Naive thymus-derived CD4-positive, alpha-beta T cell (primary cell): ENCODE measurements at regions of chr17 and their contacts with region 1.

Region 1: DNA sequence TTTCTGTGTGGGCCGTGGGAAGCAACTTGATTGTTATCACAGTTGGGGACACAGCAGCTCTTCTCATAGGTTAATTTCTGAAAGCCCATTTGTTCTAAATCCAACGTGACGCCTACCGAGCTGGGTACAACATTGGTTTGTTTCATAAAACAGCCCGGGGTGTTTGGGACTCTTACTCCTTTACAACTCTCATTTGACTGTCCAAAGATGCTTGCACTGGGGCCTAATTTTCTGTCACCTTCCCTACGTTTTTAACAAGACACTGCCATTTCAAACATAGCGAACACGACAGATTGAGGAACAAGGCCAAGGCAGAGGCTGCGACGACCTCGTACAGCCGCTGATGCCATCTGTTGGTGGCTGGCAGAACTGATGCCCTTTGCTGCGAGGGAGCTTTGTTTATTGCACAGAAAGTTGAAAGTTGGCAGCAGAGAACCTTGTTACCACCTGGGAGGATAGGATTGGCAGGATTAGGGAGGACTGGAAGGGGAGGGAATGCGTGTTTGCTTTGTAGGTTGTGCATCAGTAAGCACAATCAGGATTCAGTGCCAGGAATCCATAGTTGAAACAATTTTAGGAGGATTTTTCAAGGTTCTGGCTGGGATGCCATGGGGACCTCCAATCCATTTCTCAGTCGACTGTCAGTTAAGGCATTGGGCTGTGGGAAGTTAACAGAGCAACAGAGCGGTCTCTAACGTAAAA is 98.3 kb downstream of the PITPNC1 start:
- DNase-seq: peak; percentile 66 to 89 (median 86)
- ATAC-seq: peak; percentile 93
- H3K4me3 ChIP-seq: peak overlapping the region; percentile 22
- H3K4me3 Mint-ChIP-seq: peak overlapping the region; percentile 60 to 88 (median 84)
- H3K27ac ChIP-seq: peak overlapping the region; percentile 77
- H3K27ac Mint-ChIP-seq: peak overlapping the region; percentile 90 to 99 (median 98)
- H3K4me1 ChIP-seq: peaks cover 44 to 53% of the 10 kb centered on the region in 2 donors
- H3K4me1 Mint-ChIP-seq: peaks cover 37 to 85% (median 65%) of the 10 kb centered on the region in 7 donors
- H3K27me3 ChIP-seq: no peaks in the 10 kb centered on the region
- H3K27me3 Mint-ChIP-seq: no peaks in the 10 kb centered on the region

Region 2: GRCh38 chr17:67400193-67400592 is 75.2 kb before region 1 on chr17:
- CTCF ChIA-PET with region 1: interaction called, 17 read pairs
- POLR2A ChIA-PET with region 1: interaction called, 18 read pairs
- intact Hi-C with region 1: loop called in 1 of 2 experiments (anchors 1 kb)
- DNase-seq: peak in 6 of 9 donors; percentile 64 to 80 (median 76)
- ATAC-seq: peak; percentile 62
- H3K4me3 ChIP-seq: peak overlapping the region; percentile 32
- H3K4me3 Mint-ChIP-seq: peak overlapping the region; percentile 66 to 93 (median 83)
- H3K27ac ChIP-seq: peak overlapping the region; percentile 83
- H3K27ac Mint-ChIP-seq: peak overlapping the region; percentile 82 to 100 (median 99)
- H3K4me1 ChIP-seq: peaks cover 9 to 77% of the 10 kb centered on the region in 2 donors
- H3K4me1 Mint-ChIP-seq: peaks cover 32 to 88% (median 77%) of the 10 kb centered on the region in 7 donors
- H3K27me3 ChIP-seq: no peaks in the 10 kb centered on the region
- H3K27me3 Mint-ChIP-seq: no peaks in the 10 kb centered on the region

Region 3: GRCh38 chr17:67431249-67432048 is 43.9 kb before region 1 on chr17:
- CTCF ChIA-PET with region 1: interaction called, 19 read pairs
- POLR2A ChIA-PET with region 1: interaction called, 176 read pairs
- intact Hi-C with region 1: loop called (anchors 1 kb)
- DNase-seq: no peak
- ATAC-seq: peak; percentile 18
- H3K4me3 ChIP-seq: no peak overlapping the region
- H3K4me3 Mint-ChIP-seq: peak overlapping the region in 9 of 10 donors; percentile 8 to 80 (median 26)
- H3K27ac ChIP-seq: peak overlapping the region; percentile 43
- H3K27ac Mint-ChIP-seq: peak overlapping the region; percentile 12 to 100 (median 85)
- H3K4me1 ChIP-seq: peaks cover 41 to 50% of the 10 kb centered on the region in 2 donors
- H3K4me1 Mint-ChIP-seq: peaks cover 27 to 93% (median 75%) of the 10 kb centered on the region in 7 donors
- H3K27me3 ChIP-seq: no peaks in the 10 kb centered on the region
- H3K27me3 Mint-ChIP-seq: no peaks in the 10 kb centered on the region

Region 4: GRCh38 chr17:67452681-67453554 is 22.5 kb before region 1 on chr17:
- CTCF ChIA-PET with region 1: interaction called, 16 read pairs
- POLR2A ChIA-PET with region 1: interaction called, 22 read pairs
- intact Hi-C with region 1: loop called (anchors 1 kb)
- DNase-seq: peak in 8 of 9 donors; percentile 36 to 86 (median 78)
- ATAC-seq: peak; percentile 93
- H3K4me3 ChIP-seq: peak overlapping the region; percentile 7
- H3K4me3 Mint-ChIP-seq: peak overlapping the region; percentile 17 to 88 (median 78)
- H3K27ac ChIP-seq: peak overlapping the region; percentile 69
- H3K27ac Mint-ChIP-seq: peak overlapping the region; percentile 84 to 100 (median 96)
- H3K4me1 ChIP-seq: peaks cover 77% of the 10 kb centered on the region in 2 donors
- H3K4me1 Mint-ChIP-seq: peaks cover 63 to 100% (median 92%) of the 10 kb centered on the region in 7 donors
- H3K27me3 ChIP-seq: no peaks in the 10 kb centered on the region
- H3K27me3 Mint-ChIP-seq: no peaks in the 10 kb centered on the region

Region 5: GRCh38 chr17:67520252-67520906 is 45.0 kb after region 1 on chr17:
- CTCF ChIA-PET with region 1: no interaction called
- POLR2A ChIA-PET with region 1: no interaction called
- intact Hi-C with region 1: no loop called
- DNase-seq: peak in 1 of 9 donors; percentile 10
- ATAC-seq: peak; percentile 61
- H3K4me3 ChIP-seq: no peak overlapping the region
- H3K4me3 Mint-ChIP-seq: peak overlapping the region; percentile 26 to 80 (median 58)
- H3K27ac ChIP-seq: peak overlapping the region; percentile 19
- H3K27ac Mint-ChIP-seq: peak overlapping the region in 8 of 9 donors; percentile 61 to 93 (median 76)
- H3K4me1 ChIP-seq: peaks cover 4 to 8% of the 10 kb centered on the region in 2 donors
- H3K4me1 Mint-ChIP-seq: peaks cover 26 to 88% (median 72%) of the 10 kb centered on the region in 7 donors
- H3K27me3 ChIP-seq: no peaks in the 10 kb centered on the region
- H3K27me3 Mint-ChIP-seq: no peaks in the 10 kb centered on the region

Region 6: DNA sequence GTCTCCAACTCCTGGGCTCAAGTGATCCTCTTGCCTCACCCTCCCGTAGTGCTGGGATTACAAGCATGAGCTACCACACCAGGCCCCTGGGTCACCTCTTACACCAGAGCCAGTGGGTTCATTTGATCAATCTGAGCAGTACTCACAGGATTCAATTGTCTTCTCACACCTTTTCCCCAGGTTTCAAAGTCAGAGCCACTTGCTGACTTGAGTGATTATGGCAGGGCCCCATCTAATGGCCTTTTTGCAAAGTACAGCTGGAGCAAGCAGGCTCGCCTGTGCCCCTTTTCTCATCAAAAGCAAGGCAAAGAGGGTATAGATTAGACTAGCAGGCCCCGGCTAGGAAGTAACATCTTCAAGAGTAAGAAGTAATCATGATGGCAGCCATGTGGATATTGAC is 127.6 kb after region 1 on chr17:
- CTCF ChIA-PET with region 1: interaction called, 3 read pairs
- POLR2A ChIA-PET with region 1: no interaction called
- intact Hi-C with region 1: loop called (anchors 1 to 5 kb)
- DNase-seq: peak in 8 of 9 donors; percentile 24 to 65 (median 53)
- ATAC-seq: peak; percentile 74
- H3K4me3 ChIP-seq: no peak overlapping the region
- H3K4me3 Mint-ChIP-seq: no peak overlapping the region
- H3K27ac ChIP-seq: no peak overlapping the region
- H3K27ac Mint-ChIP-seq: peak overlapping the region in 6 of 9 donors; percentile 36 to 83 (median 70)
- H3K4me1 ChIP-seq: no peaks in the 10 kb centered on the region
- H3K4me1 Mint-ChIP-seq: peaks cover 5 to 47% (median 39%) of the 10 kb centered on the region in 7 donors
- H3K27me3 ChIP-seq: no peaks in the 10 kb centered on the region
- H3K27me3 Mint-ChIP-seq: no peaks in the 10 kb centered on the region

Region 7: DNA sequence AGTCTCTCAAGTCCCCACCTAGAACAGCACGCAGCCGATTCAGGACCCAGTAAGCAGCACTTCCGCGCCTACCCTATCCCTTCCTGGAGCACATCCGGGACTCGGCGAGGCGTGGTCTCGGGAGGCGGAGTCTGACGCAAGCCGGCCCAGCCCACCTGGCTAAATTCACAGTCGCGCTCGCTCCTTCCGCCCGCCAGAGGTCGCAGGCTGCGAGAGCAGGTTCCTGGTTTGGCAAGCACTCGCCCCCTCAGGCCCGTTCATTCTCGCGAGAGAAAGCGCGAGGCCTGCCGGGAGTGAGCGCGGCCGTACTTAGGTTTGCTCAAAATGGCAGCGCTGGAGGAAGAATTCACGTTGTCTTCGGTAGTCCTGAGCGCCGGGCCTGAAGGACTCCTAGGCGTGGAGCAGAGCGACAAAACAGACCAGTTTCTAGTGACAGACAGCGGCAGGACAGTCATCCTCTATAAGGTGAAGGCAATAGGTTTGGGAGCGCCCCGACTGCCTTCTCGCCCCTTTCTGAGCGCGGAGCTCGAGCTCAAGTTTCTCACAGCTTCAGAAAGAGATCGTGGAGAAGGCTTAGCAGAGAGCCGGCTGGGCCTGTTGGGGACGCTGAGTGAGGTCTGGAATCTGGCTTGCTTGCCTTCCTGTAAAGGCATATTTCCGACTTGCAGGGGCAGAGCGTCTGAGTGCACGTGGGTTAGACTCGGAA is 242.4 kb after region 1 on chr17 and contains the start of gene NOL11:
- CTCF ChIA-PET with region 1: no interaction called
- POLR2A ChIA-PET with region 1: no interaction called
- intact Hi-C with region 1: loop called in 1 of 2 experiments (anchors 1 kb)
- DNase-seq: peak; percentile 97 to 100 (median 99)
- ATAC-seq: peak; percentile 98
- H3K4me3 ChIP-seq: peak within 1 kb of the TSS; percentile 96
- H3K4me3 Mint-ChIP-seq: peak within 1 kb of the TSS; percentile 95 to 100 (median 100)
- H3K27ac ChIP-seq: peak within 1 kb of the TSS; percentile 95
- H3K27ac Mint-ChIP-seq: peak within 1 kb of the TSS; percentile 96 to 100 (median 99)
- H3K4me1 ChIP-seq: peaks cover 14 to 20% of the 10 kb centered on the region in 2 donors
- H3K4me1 Mint-ChIP-seq: peaks cover 7 to 47% (median 28%) of the 10 kb centered on the region in 7 donors
- H3K27me3 ChIP-seq: no peaks in the 10 kb centered on the region
- H3K27me3 Mint-ChIP-seq: peaks cover 0 to 5% (median 0%) of the 10 kb centered on the region in 5 donors
- total RNA-seq, gene NOL11: 50.0 to 72.9 (median 65.1) TPM